Upper lobe of right lung (tissue), 1 donor: ENCODE measurements at regions of chr9 and their contacts with region 1.

Region 1: DNA sequence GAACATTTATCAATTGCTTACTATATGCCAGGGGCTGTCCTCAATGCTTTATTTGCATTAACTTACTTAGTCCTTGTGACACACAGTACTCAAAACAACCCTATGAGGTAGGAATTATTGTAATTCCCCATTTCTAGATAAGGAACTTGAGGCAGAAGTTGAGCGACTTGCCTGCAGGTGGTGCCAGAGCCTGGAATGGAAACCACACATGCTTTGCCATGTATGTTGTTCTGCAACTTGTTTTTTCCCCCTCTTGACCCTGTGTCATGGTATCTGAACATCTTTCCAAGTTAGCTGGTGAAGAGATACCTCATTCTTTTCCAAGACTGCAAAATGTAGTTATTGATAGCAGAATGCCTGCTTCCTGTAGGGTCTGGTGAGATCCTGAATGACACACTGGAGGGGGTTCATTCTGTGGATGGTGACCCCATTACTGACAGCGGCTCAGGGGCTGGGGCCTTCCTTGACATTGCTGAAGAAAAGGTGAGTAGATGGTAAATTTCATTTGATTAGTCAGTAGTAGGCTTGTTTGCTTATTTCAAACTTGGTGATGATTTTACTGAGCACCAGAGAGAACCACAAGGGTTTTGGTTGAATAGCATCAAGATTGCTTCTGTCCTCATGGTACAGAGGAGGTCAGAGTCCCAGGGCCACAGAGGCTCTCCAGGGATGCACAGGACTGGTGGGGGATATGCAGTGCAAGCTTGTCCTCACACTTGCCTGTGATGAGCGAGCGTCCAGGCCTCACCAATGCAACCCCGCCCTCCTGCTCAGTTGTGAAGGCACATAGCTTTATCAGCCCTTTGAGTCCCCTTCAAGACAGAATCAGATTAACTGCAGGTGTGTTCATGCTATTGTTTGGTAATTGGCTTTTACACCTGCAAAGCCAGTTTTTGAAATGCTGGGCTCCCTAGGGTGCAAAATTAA is 57.0 kb downstream of the COL15A1 start:
- DNase-seq: no peak
- ATAC-seq: peak; percentile 74
- H3K4me3 ChIP-seq: no peak overlapping the region
- H3K27ac ChIP-seq: no peak overlapping the region
- H3K4me1 ChIP-seq: peaks cover 11% of the 10 kb centered on the region
- H3K27me3 ChIP-seq: no peaks in the 10 kb centered on the region
- CTCF ChIP-seq: peak; percentile 72

Region 2: DNA sequence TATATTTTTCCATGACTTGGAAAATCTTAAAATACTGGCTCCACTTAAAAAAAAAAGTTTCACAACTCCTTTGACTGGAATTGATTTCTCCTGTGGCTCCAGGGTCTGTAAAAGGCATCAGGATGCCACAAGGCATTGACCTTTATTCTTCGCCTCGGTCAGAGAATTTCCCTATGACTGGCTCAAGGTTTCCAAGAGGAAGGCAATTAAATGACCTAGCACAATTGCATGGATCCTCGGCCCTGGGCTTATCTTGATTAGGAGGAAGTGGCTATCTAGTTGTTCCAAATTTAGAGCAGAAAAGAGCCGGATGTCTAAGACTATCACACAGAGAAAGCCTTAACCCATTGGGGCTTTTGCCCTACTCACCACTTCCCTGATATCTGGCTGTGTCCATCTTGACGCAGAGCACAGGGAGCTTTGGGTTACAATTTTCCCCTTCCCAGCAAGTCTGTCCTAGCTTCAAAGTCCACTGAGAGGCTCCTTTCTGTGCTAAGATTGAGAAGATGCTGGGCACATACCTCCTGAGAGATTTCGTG is 114.0 kb before region 1 on chr9:
- intact Hi-C with region 1: no loop called
- DNase-seq: no peak
- ATAC-seq: peak; percentile 40
- H3K4me3 ChIP-seq: no peak overlapping the region
- H3K27ac ChIP-seq: no peak overlapping the region
- H3K4me1 ChIP-seq: peaks cover 25% of the 10 kb centered on the region
- H3K27me3 ChIP-seq: no peaks in the 10 kb centered on the region
- CTCF ChIP-seq: no peak

Region 3: DNA sequence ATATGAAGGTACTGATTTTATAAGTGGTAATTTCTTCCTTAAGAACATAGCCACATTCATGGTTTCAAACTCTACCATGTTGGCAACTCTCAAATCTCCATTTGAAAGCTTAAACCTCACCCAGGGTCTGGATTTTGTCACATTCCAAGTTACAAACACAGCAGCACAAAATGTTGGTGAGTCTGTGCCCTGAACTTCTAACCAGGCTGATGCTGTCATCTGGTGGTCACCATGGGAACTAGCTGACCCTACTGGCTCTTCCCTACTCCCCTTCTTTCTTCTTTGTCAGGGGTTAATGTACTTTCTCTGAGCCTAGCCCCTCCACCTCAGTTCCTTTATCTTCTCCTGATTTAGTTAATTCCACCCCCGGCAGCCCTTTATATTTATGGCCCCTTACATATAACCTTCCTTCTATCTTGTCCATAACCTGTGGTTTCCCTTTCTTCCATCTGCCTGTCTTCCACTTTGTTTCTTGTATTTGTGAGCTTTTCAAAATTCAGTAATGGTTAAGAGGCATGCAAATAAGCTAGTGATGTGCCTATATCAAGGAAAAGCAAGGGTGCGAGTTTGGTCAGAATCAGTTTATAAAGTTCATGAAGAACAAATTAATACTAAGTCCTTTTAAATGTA is 140.1 kb after region 1 on chr9:
- intact Hi-C with region 1: loop called (anchors 10 kb)
- DNase-seq: no peak
- ATAC-seq: peak; percentile 84
- H3K4me3 ChIP-seq: no peak overlapping the region
- H3K27ac ChIP-seq: no peak overlapping the region
- H3K4me1 ChIP-seq: peaks cover 8% of the 10 kb centered on the region
- H3K27me3 ChIP-seq: no peaks in the 10 kb centered on the region
- CTCF ChIP-seq: peak; percentile 81

Region 4: DNA sequence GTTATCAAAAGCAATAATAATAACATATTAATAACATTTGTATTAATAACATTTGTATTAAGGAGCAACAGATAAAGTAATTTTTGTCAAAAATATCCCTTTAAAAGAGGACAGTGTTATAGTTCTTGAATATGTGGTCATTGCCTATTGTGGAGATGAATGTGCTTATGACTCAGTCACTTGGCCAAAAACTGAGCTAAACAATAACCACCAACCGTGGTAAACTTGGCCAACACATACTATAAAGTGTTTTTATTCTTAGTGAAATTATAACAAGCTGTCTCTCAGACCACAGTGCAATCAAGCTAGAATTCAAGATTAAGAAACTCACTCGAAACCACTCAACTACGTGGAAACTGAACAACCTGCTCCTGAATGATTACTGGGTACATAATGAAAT is 1868.6 kb after region 1 on chr9:
- intact Hi-C with region 1: no loop called
- DNase-seq: no peak
- ATAC-seq: no peak
- H3K4me3 ChIP-seq: no peak overlapping the region
- H3K27ac ChIP-seq: no peak overlapping the region
- H3K4me1 ChIP-seq: no peaks in the 10 kb centered on the region
- H3K27me3 ChIP-seq: no peaks in the 10 kb centered on the region
- CTCF ChIP-seq: no peak